ENCODE measurements at regions of chr4 and their contacts with region 1.

Region 1: DNA sequence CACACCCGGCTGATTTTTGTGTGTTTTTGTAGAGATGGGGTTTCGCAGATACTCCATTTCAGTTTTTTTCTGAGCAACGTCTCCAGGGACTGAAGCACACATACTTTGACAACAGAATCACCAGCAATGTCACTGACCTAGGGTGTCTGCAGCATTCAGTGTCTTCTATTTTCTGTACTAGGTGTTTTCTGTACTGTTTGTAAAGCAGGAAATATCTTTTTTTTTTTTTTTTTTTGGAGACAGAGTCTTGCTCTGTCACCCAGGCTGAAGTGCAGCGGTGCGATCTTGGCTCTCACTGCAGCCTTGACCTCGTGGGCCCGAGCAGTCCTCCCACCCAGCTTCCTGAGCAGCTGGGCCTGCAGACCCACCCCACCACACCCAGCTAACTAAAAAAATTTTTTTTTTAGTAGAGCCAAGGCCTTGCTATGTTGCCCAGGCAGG is 8.9 kb downstream of the ADD1 start:
- DNase-seq: peak; percentile 87
- ATAC-seq: peak; percentile 83
- H3K4me3 ChIP-seq: peak overlapping the region; percentile 8 to 48 (median 23)
- H3K4me3 Mint-ChIP-seq: peak overlapping the region; percentile 76
- H3K27ac ChIP-seq: peak overlapping the region; percentile 72 to 81
- H3K27ac Mint-ChIP-seq: peak overlapping the region; percentile 79
- H3K4me1 ChIP-seq: peaks cover 88% of the 10 kb centered on the region in 2 donors
- H3K4me1 Mint-ChIP-seq: peaks cover 76% of the 10 kb centered on the region
- H3K27me3 ChIP-seq: no peaks in the 10 kb centered on the region
- H3K27me3 Mint-ChIP-seq: no peaks in the 10 kb centered on the region
- CTCF ChIP-seq: no peak

Region 2: DNA sequence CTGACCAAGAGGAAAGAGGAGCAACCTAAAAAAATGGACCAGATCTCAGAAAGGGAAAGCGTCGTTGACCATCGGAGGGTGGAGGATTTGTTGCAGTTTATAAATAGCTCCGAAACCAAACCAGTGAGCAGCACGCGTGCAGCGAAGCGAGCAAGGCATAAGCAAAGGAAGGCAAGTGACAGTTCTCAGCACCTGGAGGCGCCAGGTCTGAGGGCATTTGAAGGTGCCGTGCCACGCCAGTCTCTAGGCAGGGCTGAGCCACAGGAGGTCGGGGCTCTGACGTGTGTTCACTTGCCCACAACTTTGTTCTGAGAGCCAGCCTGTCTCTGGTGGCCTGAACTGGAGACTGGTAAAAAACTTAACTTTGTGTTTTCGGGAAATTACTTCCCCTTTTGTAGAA is 156.1 kb before region 1 on chr4:
- CTCF ChIA-PET with region 1: interaction called, 5 read pairs
- POLR2A ChIA-PET with region 1: no interaction called
- intact Hi-C with region 1: loop called (anchors 5 kb)
- DNase-seq: peak; percentile 93
- ATAC-seq: peak; percentile 96
- H3K4me3 ChIP-seq: peak overlapping the region; percentile 17 to 69 (median 35)
- H3K4me3 Mint-ChIP-seq: peak overlapping the region; percentile 78
- H3K27ac ChIP-seq: peak overlapping the region; percentile 85 to 87
- H3K27ac Mint-ChIP-seq: peak overlapping the region; percentile 93
- H3K4me1 ChIP-seq: peaks cover 47 to 55% of the 10 kb centered on the region in 2 donors
- H3K4me1 Mint-ChIP-seq: peaks cover 55% of the 10 kb centered on the region
- H3K27me3 ChIP-seq: no peaks in the 10 kb centered on the region
- H3K27me3 Mint-ChIP-seq: no peaks in the 10 kb centered on the region
- CTCF ChIP-seq: no peak

Region 3: GRCh38 chr4:2755837-2756694 is 96.4 kb before region 1 on chr4 and contains the start of gene TNIP2:
- CTCF ChIA-PET with region 1: interaction called, 3 read pairs
- POLR2A ChIA-PET with region 1: interaction called, 10 read pairs
- intact Hi-C with region 1: no loop called
- DNase-seq: peak; percentile 88
- ATAC-seq: peak; percentile 86
- H3K4me3 ChIP-seq: peak within 1 kb of the TSS in 4 of 5 experiments; percentile 61 to 78 (median 68)
- H3K4me3 Mint-ChIP-seq: peak within 1 kb of the TSS; percentile 83
- H3K27ac ChIP-seq: peak within 1 kb of the TSS; percentile 38 to 83
- H3K27ac Mint-ChIP-seq: peak within 1 kb of the TSS; percentile 79
- H3K4me1 ChIP-seq: peaks cover 11 to 21% of the 10 kb centered on the region in 2 donors
- H3K4me1 Mint-ChIP-seq: peaks cover 31% of the 10 kb centered on the region
- H3K27me3 ChIP-seq: no peaks in the 10 kb centered on the region
- H3K27me3 Mint-ChIP-seq: no peaks in the 10 kb centered on the region
- CTCF ChIP-seq: peak; percentile 31
- total RNA-seq, gene TNIP2: 47.6 and 51.0 TPM in 2 replicates

Region 4: DNA sequence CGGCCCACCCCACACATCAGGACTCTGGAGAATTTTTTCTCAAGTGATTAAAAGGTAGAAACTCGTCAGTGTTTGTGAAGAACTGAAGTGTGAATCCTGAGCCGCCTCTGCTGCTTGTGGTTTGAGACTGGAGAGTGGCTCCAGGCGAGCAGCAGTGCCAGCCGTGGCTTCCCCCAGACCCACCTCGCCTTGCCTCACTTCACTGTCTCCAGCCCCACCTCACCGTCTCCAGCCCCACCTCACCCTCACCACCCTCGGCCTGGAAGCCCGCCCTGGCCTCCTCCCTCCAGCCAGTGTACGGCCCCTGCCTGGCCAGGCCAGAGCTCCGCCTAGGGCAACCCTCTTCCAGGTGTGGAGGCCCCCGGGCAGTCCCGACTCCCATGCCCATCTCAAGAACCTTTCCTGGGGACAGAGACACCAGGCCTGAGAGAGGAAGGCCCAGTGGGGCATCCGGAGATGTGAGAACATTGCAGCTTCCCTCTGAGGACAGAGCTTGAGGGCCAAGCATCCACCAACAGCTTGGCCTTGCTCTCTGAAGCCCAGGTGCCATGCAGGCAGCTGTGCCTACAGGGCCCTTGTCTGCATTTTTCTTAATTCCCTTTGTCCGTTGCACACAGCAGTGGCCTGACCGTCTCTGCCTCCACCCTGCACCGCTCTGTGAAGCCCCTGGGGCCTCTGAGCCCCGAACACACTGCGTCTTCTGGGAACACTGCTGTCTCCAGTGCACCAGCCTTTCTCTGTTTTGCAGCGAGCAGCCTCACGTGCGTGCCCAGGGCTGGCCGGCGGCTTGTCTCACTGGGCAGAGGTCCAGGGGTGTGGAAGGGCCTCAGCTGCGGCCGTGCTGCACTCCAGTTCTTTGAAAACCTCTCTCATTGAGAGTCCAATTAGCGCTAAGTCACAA is 45.9 kb before region 1 on chr4:
- CTCF ChIA-PET with region 1: no interaction called
- POLR2A ChIA-PET with region 1: interaction called, 10 read pairs
- intact Hi-C with region 1: no loop called
- DNase-seq: peak; percentile 67
- ATAC-seq: peak; percentile 61
- H3K4me3 ChIP-seq: peak overlapping the region in 3 of 5 experiments; percentile 31 to 34 (median 32)
- H3K4me3 Mint-ChIP-seq: peak overlapping the region; percentile 80
- H3K27ac ChIP-seq: peak overlapping the region; percentile 88 to 89
- H3K27ac Mint-ChIP-seq: peak overlapping the region; percentile 96
- H3K4me1 ChIP-seq: peaks cover 87 to 93% of the 10 kb centered on the region in 2 donors
- H3K4me1 Mint-ChIP-seq: peaks cover 74% of the 10 kb centered on the region
- H3K27me3 ChIP-seq: no peaks in the 10 kb centered on the region
- H3K27me3 Mint-ChIP-seq: no peaks in the 10 kb centered on the region
- CTCF ChIP-seq: no peak

Region 5: DNA sequence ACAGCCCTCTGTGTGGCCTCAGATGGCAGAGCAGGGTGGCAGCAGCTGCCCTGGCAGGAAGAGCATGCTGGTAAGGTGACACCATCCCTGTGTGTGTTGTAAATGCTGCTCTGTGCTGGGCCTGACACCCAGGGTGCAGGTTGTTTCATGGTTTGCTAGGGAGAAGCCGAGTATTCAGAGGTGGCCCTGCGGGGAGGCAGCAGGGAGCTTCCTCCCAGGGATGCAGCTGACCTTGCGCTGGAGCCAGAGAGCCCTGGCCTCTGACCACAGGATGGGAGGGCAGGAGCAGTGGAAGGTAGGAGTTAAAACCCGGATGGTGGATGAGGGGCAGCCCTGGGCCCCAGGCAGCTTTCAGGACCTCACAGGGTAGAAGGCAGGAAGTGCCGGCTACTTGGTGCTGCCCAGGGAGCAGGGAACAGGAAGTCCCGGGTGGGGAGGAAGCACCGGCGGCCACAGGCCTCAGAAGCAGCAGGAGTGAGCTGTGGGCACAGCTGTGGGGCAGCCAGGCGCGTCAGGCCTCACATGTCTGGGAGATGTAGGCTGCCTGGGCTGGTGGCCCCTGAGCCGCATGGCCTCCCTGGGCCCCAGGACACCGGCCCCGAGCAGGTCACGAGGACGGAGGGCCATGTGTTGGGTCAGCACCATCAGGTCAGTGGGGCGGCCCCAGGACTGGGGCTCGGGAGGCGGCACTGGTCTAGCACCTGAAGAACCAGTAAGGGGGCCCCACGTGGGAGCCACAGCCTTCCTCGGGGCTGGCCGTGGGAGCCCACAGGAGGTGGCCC is 40.5 kb before region 1 on chr4:
- CTCF ChIA-PET with region 1: no interaction called
- POLR2A ChIA-PET with region 1: interaction called, 10 read pairs
- intact Hi-C with region 1: loop called (anchors 1 kb)
- DNase-seq: peak; percentile 87
- ATAC-seq: peak; percentile 79
- H3K4me3 ChIP-seq: peak overlapping the region; percentile 32 to 90 (median 74)
- H3K4me3 Mint-ChIP-seq: peak overlapping the region; percentile 80
- H3K27ac ChIP-seq: peak overlapping the region; percentile 89
- H3K27ac Mint-ChIP-seq: peak overlapping the region; percentile 98
- H3K4me1 ChIP-seq: peaks cover 90 to 94% of the 10 kb centered on the region in 2 donors
- H3K4me1 Mint-ChIP-seq: peaks cover 84% of the 10 kb centered on the region
- H3K27me3 ChIP-seq: no peaks in the 10 kb centered on the region
- H3K27me3 Mint-ChIP-seq: no peaks in the 10 kb centered on the region
- CTCF ChIP-seq: no peak

Region 6: GRCh38 chr4:2837904-2838496 is 14.5 kb before region 1 on chr4:
- CTCF ChIA-PET with region 1: interaction called, 5 read pairs
- POLR2A ChIA-PET with region 1: interaction called, 18 read pairs
- intact Hi-C with region 1: loop called (anchors 1 kb)
- DNase-seq: peak; percentile 81
- ATAC-seq: peak; percentile 58
- H3K4me3 ChIP-seq: peak overlapping the region in 4 of 5 experiments; percentile 18 to 51 (median 34)
- H3K4me3 Mint-ChIP-seq: peak overlapping the region; percentile 71
- H3K27ac ChIP-seq: peak overlapping the region; percentile 78
- H3K27ac Mint-ChIP-seq: peak overlapping the region; percentile 63
- H3K4me1 ChIP-seq: peaks cover 70 to 76% of the 10 kb centered on the region in 2 donors
- H3K4me1 Mint-ChIP-seq: peaks cover 72% of the 10 kb centered on the region
- H3K27me3 ChIP-seq: no peaks in the 10 kb centered on the region
- H3K27me3 Mint-ChIP-seq: no peaks in the 10 kb centered on the region
- CTCF ChIP-seq: no peak